ENCODE measurements at regions of chr21 and their contacts with region 1.

Region 1: DNA sequence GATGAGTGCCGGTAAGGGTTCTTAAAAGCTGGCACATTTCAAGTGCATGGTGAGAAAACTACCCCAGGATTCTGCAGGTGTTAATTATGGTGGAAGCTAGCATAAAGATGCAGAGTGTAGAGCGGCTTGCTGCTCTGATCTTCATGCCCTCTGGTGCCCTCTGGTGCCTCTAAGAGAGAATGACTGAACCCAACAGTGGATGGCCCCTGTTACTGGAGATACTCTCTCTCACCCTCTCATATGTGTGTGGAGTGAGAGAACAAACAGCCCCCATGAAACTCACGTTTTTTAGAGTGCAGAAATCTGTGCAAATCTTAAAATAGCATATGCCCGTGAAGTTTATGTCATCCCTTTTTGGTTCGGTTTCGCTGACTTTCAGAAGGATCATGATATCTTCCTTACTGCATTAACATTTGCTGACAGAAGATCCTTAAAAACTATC is 90.0 kb downstream of the GRIK1 start:
- DNase-seq: peak; percentile 60
- H3K4me3 ChIP-seq: no peak overlapping the region
- H3K27ac ChIP-seq: no peak overlapping the region
- H3K4me1 ChIP-seq: no peaks in the 10 kb centered on the region
- H3K27me3 ChIP-seq: no peaks in the 10 kb centered on the region
- CTCF ChIP-seq: peak; percentile 69 to 74
- POLR2A ChIP-seq: no peak

Region 2: DNA sequence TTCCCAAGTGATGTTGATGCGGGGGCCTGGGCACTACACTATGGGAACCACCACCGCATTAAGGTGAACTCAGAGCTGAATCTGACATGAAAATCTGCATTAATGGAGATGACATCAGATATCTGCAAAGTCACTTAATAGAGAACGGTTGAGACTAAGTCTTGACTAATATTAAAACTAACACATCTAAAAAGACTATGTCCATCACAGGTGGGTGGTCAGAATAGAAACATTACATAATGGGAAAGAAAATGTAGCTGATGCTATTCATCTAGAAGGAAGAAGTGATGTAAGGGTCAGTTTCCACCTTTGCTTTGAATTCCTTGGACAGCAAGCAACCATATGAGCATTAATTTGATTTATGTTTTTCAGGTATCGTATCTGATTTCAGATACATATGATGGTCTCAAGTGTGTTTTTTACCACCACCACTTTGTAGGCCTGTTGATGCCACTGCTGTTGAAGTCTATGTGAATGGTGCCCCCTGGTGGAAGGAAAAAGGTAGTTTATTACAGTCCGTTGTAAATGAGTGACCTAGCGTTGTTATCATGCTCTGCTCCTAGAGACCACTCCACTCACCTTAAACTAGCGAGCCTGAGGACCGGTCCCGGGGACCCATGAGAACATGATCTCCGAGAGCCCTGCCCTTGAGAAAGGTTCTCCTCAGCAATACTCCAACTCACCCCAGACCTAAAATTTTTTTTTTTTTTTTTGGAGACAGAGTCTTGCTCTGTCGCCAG is 477.5 kb before region 1 on chr21:
- CTCF ChIA-PET with region 1: no interaction called
- POLR2A ChIA-PET with region 1: no interaction called
- dilution Hi-C with region 1: no loop called
- intact Hi-C with region 1: loop called (anchors 10 kb)
- DNase-seq: peak; percentile 75
- H3K4me3 ChIP-seq: no peak overlapping the region
- H3K27ac ChIP-seq: no peak overlapping the region
- H3K4me1 ChIP-seq: peaks cover 4% of the 10 kb centered on the region
- H3K27me3 ChIP-seq: no peaks in the 10 kb centered on the region
- CTCF ChIP-seq: peak; percentile 57 to 61
- POLR2A ChIP-seq: no peak

Region 3: DNA sequence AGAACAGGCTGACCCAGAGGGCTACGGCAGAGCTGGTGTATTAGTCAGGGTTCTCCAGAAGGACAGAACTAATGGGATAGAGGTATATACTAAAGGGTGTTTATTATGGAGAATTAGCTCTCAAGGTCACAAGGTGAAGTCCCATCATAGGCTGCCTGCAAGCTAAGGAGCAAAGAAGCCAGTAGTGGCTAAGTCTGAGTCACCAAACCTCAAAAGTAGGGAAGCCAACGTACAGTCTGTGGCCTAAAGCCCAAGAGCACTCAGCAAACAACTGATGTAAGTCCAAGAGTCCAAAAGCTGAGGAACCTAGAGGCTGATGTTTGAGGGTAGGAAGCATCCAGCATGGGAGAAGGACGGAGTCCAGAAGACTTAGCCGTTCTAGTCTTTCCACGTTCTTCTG is 371.8 kb before region 1 on chr21:
- CTCF ChIA-PET with region 1: interaction called, 33 read pairs
- POLR2A ChIA-PET with region 1: no interaction called
- dilution Hi-C with region 1: no loop called
- intact Hi-C with region 1: loop called (anchors 1 kb)
- DNase-seq: no peak
- H3K4me3 ChIP-seq: no peak overlapping the region
- H3K27ac ChIP-seq: no peak overlapping the region
- H3K4me1 ChIP-seq: no peaks in the 10 kb centered on the region
- H3K27me3 ChIP-seq: peaks cover 0 to 2% of the 10 kb centered on the region in 2 experiments
- CTCF ChIP-seq: no peak
- POLR2A ChIP-seq: no peak

Region 4: DNA sequence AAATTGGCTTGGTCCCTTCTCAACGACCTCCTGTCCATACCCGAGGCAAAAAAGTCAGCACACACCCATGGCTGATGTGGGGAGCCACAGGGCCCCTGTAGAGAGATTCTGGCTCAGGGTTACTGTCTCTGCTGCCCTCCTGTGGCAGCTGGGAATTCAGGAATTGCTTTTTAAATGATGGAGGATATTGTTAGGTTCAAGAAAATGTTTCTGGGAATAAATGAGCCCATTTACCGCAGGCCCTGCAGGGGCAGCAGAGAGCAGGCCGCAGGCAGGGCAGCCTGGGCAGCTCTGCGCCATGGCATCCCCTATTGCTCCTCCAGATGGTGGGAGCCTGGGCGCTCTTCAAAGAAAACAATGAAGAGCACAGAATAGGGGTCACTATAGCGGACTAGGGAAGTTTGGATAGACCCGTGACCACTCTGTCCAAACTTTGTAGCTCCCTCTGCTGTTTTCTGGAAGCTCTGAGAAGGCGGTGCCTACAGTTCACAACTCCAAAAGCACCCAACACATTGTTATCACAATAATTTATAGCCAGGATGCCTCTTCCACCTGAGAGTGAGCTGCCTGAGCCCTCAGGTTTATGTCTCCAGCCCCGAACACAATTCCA is 349.9 kb before region 1 on chr21:
- CTCF ChIA-PET with region 1: interaction called, 9 read pairs
- POLR2A ChIA-PET with region 1: no interaction called
- dilution Hi-C with region 1: no loop called
- intact Hi-C with region 1: loop called (anchors 1 kb)
- DNase-seq: peak; percentile 28
- H3K4me3 ChIP-seq: no peak overlapping the region
- H3K27ac ChIP-seq: no peak overlapping the region
- H3K4me1 ChIP-seq: no peaks in the 10 kb centered on the region
- H3K27me3 ChIP-seq: no peaks in the 10 kb centered on the region
- CTCF ChIP-seq: peak; percentile 59 to 74
- POLR2A ChIP-seq: no peak

Region 5: DNA sequence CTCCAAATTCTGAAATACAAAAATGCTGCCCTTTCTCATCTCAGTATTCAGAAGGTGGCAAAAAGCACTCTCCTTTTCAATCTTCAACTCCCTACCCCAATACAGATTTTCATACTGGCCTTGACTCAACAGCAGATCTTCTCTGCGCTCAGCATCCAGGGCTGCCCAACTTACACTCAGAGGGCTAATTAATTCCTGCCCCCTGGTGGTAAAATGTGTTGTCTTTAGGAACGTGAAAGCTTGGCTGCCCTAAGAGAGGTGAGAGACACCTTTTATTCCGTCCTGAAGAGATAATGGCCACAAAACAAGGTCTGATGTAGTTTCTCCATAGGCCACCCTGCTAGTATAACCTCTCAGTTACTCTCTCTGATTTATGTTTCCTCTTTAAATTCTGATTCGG is 408.0 kb after region 1 on chr21:
- CTCF ChIA-PET with region 1: no interaction called
- POLR2A ChIA-PET with region 1: no interaction called
- dilution Hi-C with region 1: no loop called
- intact Hi-C with region 1: no loop called
- DNase-seq: no peak
- H3K4me3 ChIP-seq: no peak overlapping the region
- H3K27ac ChIP-seq: no peak overlapping the region
- H3K4me1 ChIP-seq: no peaks in the 10 kb centered on the region
- H3K27me3 ChIP-seq: no peaks in the 10 kb centered on the region
- CTCF ChIP-seq: no peak
- POLR2A ChIP-seq: no peak

Measured in endothelial cell of umbilical vein (primary cell).